ENCODE measurements at regions of chr11 and their contacts with region 1.

Region 1: DNA sequence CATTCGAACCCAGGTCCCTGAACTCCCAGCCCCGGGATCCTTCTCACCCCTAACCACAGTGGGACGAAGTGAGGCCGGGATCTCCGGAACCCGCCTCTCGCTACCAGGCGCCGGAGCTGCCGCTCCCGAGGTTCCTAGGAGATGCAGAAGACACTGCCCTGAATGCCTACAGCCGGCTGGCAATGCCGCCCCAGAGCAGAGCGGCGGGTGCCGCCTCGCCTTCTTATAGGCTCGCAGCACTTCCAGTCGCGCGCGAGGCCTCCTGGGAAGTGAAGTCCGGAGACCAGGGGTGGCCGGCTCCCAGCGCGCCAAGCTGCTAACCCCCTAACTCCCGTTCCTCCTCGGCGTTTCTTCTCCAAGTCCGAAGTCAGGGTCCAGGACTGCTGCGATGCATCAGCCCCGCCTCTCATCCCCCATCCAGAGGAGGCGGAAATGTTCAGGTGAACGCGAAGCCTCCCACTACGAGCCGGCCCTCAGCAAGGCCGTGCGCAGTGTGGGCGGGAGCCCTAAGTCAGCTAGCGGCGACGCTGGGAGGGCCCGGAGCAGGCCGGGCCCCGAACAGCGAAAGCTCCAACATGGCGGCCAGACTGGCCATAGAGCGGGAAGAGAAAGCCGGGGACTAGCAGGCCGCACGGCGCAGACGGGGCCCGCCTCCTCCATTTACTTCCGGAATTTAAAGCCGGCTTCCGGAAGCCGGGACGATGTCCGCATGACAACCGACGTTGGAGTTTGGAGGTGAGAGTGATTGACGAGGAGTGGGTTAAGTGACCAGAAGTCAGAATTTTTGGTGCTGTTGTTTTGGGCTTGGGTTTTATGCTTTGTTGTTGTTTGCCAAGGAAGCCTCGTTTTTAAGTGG is at the starts of genes CYB561A3 and TMEM138:
- DNase-seq: peak; percentile 96
- ATAC-seq: peak; percentile 96
- H3K4me3 Mint-ChIP-seq: peak within 1 kb of the TSS; percentile 99
- H3K27ac Mint-ChIP-seq: peak within 1 kb of the TSS; percentile 99
- H3K4me1 Mint-ChIP-seq: peaks cover 35% of the 10 kb centered on the region
- H3K27me3 Mint-ChIP-seq: no peaks in the 10 kb centered on the region
- CTCF ChIP-seq: no peak
- total RNA-seq, gene CYB561A3: 32.4 to 33.5 TPM
- total RNA-seq, gene TMEM138: 38.6 to 47.0 TPM

Region 2: DNA sequence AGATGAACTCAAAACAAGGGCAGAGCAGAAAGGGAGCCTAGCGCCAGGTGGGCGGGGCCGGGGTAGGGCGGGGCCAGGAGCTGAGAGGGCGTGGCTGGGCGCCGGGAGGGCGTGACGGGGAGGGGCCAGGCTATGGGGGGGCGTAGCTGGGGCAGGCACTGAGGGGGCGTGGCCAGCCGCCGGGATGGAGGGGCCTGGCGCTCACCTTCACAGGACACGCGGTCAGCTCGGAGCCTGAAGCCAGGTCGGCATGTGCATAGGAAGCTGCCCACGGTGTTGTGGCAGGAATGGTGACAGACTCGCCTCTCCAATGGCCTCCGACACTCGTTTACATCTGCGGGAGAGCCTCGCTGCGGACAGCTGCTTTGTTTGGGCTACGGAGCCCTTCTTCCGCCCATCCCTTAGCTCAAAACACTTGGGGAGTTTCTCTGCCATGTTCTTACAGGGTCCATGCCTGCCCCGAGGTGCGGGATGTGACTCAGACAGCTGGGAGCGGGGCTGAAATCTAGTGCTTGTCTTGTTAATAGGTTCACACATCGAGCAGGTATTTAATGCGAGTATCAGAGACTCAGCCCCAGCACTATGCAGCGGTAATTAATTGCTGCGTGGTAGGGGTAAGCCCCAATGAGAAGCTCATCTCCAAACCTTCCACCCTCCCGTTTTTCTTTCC is 80.2 kb before region 1 on chr11:
- CTCF ChIA-PET with region 1: no interaction called
- POLR2A ChIA-PET with region 1: no interaction called
- intact Hi-C with region 1: no loop called
- DNase-seq: peak; percentile 51
- ATAC-seq: peak; percentile 98
- H3K4me3 Mint-ChIP-seq: no peak overlapping the region
- H3K27ac Mint-ChIP-seq: no peak overlapping the region
- H3K4me1 Mint-ChIP-seq: peaks cover 2% of the 10 kb centered on the region
- H3K27me3 Mint-ChIP-seq: no peaks in the 10 kb centered on the region
- CTCF ChIP-seq: no peak

Region 3: DNA sequence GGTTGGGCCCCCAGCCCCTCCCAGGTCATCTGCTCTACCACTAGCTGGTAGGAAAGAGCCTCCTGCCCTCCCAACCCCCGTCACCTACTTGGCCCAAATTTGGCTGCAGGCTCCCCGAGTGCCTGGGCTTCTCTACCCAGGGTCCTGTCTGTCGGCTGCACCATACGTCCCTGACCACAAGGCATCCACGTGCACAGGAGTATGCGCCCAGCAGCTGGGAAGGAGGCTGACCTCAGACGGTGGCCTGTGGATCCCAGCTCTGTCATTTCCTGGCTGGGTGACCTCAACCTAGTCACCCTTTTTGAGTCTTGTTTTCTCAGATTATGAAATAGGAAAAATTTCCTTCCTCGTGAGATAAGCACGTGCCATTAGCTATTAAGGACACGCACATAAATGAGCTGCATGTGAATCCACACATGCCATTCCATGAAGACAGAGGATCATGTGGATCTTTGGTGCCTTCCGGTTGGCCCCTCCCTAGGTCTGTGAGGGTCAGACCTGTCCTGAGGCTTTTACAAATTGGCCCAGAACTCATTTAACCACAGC is 13.9 kb before region 1 on chr11:
- CTCF ChIA-PET with region 1: interaction called, 181 read pairs
- POLR2A ChIA-PET with region 1: interaction called, 37 read pairs
- intact Hi-C with region 1: no loop called
- DNase-seq: no peak
- ATAC-seq: no peak
- H3K4me3 Mint-ChIP-seq: no peak overlapping the region
- H3K27ac Mint-ChIP-seq: no peak overlapping the region
- H3K4me1 Mint-ChIP-seq: no peaks in the 10 kb centered on the region
- H3K27me3 Mint-ChIP-seq: no peaks in the 10 kb centered on the region
- CTCF ChIP-seq: no peak

Region 4: GRCh38 chr11:61392981-61393595 is 31.2 kb after region 1 on chr11:
- CTCF ChIA-PET with region 1: interaction called, 8 read pairs
- POLR2A ChIA-PET with region 1: interaction called, 21 read pairs
- intact Hi-C with region 1: no loop called
- DNase-seq: peak; percentile 35
- ATAC-seq: peak; percentile 41
- H3K4me3 Mint-ChIP-seq: peak overlapping the region; percentile 80
- H3K27ac Mint-ChIP-seq: peak overlapping the region; percentile 88
- H3K4me1 Mint-ChIP-seq: peaks cover 24% of the 10 kb centered on the region
- H3K27me3 Mint-ChIP-seq: no peaks in the 10 kb centered on the region
- CTCF ChIP-seq: peak; percentile 28